ENCODE measurements at regions of chr12 and their contacts with region 1.

Region 1: GRCh38 chr12:107912421-107913004 is 138.0 kb downstream of the ASCL4 start:
- DNase-seq: peak; percentile 78 to 86 (median 79)
- H3K4me3 ChIP-seq: peak overlapping the region in 5 of 7 experiments; percentile 23 to 80 (median 63)
- H3K27ac ChIP-seq: no peak overlapping the region
- H3K4me1 ChIP-seq: peaks cover 0 to 11% (median 6%) of the 10 kb centered on the region in 4 experiments
- H3K27me3 ChIP-seq: peaks cover 4 to 26% (median 10%) of the 10 kb centered on the region in 5 experiments

Region 2: DNA sequence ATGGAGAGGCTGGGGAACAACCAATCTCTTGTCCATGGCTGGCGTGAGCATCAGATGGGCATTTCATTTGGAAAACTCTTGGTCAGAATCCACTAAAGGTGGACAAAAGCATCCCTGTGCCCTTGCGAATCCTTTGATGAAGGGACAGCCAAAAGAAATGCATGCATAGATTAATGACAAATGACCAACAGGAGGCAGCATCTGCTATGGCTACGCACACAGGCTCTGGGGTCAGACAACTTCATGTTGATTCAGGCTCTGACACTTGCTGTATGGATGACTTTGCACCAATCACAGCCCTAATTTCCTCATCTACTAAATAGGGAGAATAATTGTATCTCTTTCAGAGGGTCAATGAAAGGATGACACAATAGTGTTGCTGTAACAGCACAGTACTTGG is 20.5 kb before region 1 on chr12:
- CTCF ChIA-PET with region 1: interaction called, 14 read pairs
- POLR2A ChIA-PET with region 1: no interaction called
- DNase-seq: peak; percentile 38 to 68 (median 62)
- H3K4me3 ChIP-seq: no peak overlapping the region
- H3K27ac ChIP-seq: no peak overlapping the region
- H3K4me1 ChIP-seq: no peaks in the 10 kb centered on the region
- H3K27me3 ChIP-seq: peaks cover 0 to 6% (median 0%) of the 10 kb centered on the region in 5 experiments

Measured in common myeloid progenitor, CD34-positive (primary cell).